Transverse colon (tissue), 4 donors: ENCODE measurements at regions of chr12 and their contacts with region 1.

Region 1: GRCh38 chr12:7108796-7109571 is at the start of gene C1RL:
- DNase-seq: peak; percentile 93
- H3K4me3 ChIP-seq: peak within 1 kb of the TSS; percentile 54 to 69 (median 62)
- H3K27ac ChIP-seq: peak within 1 kb of the TSS; percentile 92 to 95 (median 93)
- H3K4me1 ChIP-seq: peaks cover 12 to 29% (median 17%) of the 10 kb centered on the region in 4 donors
- H3K27me3 ChIP-seq: no peaks in the 10 kb centered on the region
- CTCF ChIP-seq: peak; percentile 98 to 99 (median 99)
- EP300 ChIP-seq: peak; percentile 80
- POLR2A ChIP-seq: peak; percentile 47
- total RNA-seq, gene C1RL: 39.6 to 261 (median 65.0) TPM

Region 2: GRCh38 chr12:6867413-6868210 is 241.4 kb before region 1 on chr12 and contains the start of gene TPI1:
- in situ Hi-C with region 1: no loop called
- intact Hi-C with region 1: loop called (anchors 2 kb)
- DNase-seq: peak; percentile 90
- H3K4me3 ChIP-seq: peak within 1 kb of the TSS; percentile 88 to 99 (median 94)
- H3K27ac ChIP-seq: peak within 1 kb of the TSS; percentile 97 to 99 (median 98)
- H3K4me1 ChIP-seq: peaks cover 24 to 47% (median 42%) of the 10 kb centered on the region in 4 donors
- H3K27me3 ChIP-seq: no peaks in the 10 kb centered on the region
- CTCF ChIP-seq: no peak
- EP300 ChIP-seq: no peak
- POLR2A ChIP-seq: peak; percentile 100
- total RNA-seq, gene TPI1: 360 to 671 (median 400) TPM

Region 3: GRCh38 chr12:6904280-6905278 is 204.4 kb before region 1 on chr12 and contains the start of gene LRRC23:
- in situ Hi-C with region 1: loop called in 1 of 4 experiments (anchors 25 kb)
- intact Hi-C with region 1: no loop called
- DNase-seq: peak; percentile 99
- H3K4me3 ChIP-seq: peak within 1 kb of the TSS; percentile 18 to 74 (median 56)
- H3K27ac ChIP-seq: peak within 1 kb of the TSS; percentile 79 to 87 (median 85)
- H3K4me1 ChIP-seq: peaks cover 4 to 23% (median 20%) of the 10 kb centered on the region in 4 donors
- H3K27me3 ChIP-seq: no peaks in the 10 kb centered on the region
- CTCF ChIP-seq: no peak
- EP300 ChIP-seq: no peak
- POLR2A ChIP-seq: peak; percentile 56
- total RNA-seq, gene LRRC23: 0.60 to 11.3 (median 5.9) TPM in 3 of 4 donors, not detected in the other

Region 4: GRCh38 chr12:6937481-6938297 is 171.3 kb before region 1 on chr12:
- in situ Hi-C with region 1: loop called in 3 of 4 experiments (anchors 10 to 25 kb)
- intact Hi-C with region 1: no loop called
- DNase-seq: peak; percentile 95
- H3K4me3 ChIP-seq: peak overlapping the region; percentile 43 to 59 (median 52)
- H3K27ac ChIP-seq: peak overlapping the region; percentile 90 to 99 (median 96)
- H3K4me1 ChIP-seq: peaks cover 14 to 52% (median 40%) of the 10 kb centered on the region in 4 donors
- H3K27me3 ChIP-seq: no peaks in the 10 kb centered on the region
- CTCF ChIP-seq: peak; percentile 82 to 99 (median 96)
- EP300 ChIP-seq: no peak
- POLR2A ChIP-seq: peak; percentile 90

Region 5: DNA sequence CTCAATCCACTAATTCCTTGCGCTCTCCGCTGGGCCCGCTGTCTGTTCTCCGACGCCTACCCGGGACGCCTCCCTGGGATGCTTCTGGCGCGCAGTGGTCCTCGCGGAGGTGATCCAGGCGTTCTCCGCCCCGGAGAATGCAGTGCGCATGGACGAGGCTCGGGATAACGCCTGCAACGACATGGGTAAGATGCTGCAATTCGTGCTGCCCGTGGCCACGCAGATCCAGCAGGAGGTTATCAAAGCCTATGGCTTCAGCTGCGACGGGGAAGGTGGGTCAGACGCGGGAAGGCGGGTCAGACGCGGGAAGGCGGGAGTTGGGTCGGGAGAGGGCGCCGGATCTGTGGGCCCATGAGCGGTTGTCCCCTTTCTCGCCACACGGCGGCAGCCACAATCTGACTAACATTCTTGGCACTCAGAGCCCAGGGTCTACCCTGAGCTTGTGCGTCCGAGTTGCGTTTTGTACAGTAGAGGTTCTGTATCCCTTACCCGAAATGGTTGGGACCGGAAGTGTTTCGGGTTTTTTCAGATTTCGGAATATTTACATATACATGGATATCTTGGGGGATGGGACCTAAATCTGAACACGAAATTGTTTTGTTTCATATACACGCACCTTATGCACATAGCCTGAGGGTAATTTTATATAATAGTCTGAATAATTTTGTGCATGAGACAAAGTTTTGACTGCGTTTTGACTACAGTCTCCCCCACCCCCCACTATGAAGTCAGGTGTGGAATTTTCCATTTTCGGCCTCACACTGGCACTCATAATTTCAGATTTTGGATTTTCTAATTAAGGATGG is 164.4 kb before region 1 on chr12:
- in situ Hi-C with region 1: loop called in 3 of 4 experiments (anchors 10 to 25 kb)
- intact Hi-C with region 1: no loop called
- DNase-seq: peak; percentile 96
- H3K4me3 ChIP-seq: peak overlapping the region; percentile 41 to 58 (median 48)
- H3K27ac ChIP-seq: peak overlapping the region; percentile 93 to 99 (median 95)
- H3K4me1 ChIP-seq: peaks cover 21 to 44% (median 28%) of the 10 kb centered on the region in 4 donors
- H3K27me3 ChIP-seq: no peaks in the 10 kb centered on the region
- CTCF ChIP-seq: peak; percentile 76 to 99 (median 85)
- EP300 ChIP-seq: no peak
- POLR2A ChIP-seq: no peak

Region 6: DNA sequence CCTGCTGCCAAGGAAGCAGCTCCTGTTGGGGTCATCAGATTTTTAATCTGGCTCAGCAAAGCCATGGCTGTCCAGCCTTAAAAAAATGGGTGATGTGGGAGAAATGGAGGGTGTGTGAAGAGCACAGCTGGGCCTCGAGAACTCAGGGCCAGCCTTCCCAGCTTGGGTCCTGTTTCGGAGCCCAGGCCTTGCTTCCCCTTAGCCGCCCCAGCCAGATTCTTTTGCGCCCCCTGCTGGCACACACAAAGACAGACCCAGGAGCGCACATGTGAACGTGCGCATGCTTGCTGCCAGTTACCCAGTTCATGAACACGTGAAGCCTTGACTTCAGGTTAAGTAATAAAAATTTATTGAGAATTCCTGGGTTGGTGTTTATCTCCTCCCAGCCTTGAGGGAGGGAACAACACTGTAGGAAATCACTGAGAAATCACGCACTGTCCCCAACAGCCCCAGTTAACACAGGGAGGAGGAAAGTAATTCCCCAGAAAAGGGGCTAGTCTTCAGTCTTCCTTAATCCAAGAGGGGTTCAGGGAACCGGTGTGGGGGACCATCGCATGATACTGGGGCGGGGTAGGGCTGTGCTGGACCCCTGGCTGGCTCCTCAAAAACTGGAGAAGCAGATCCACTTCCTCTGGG is 143.8 kb before region 1 on chr12:
- in situ Hi-C with region 1: no loop called
- intact Hi-C with region 1: loop called (anchors 10 kb)
- DNase-seq: peak; percentile 95
- H3K4me3 ChIP-seq: peak overlapping the region in 2 of 4 donors; percentile 54 to 62
- H3K27ac ChIP-seq: peak overlapping the region; percentile 89 to 95 (median 94)
- H3K4me1 ChIP-seq: peaks cover 34 to 71% (median 57%) of the 10 kb centered on the region in 4 donors
- H3K27me3 ChIP-seq: no peaks in the 10 kb centered on the region
- CTCF ChIP-seq: peak; percentile 81 to 98 (median 91)
- EP300 ChIP-seq: no peak
- POLR2A ChIP-seq: peak; percentile 59

Region 7: GRCh38 chr12:7060353-7060954 is 48.5 kb before region 1 on chr12 and contains the start of gene C1S:
- in situ Hi-C with region 1: no loop called
- intact Hi-C with region 1: loop called (anchors 2 kb)
- DNase-seq: peak; percentile 54
- H3K4me3 ChIP-seq: peak within 1 kb of the TSS; percentile 14 to 49 (median 24)
- H3K27ac ChIP-seq: peak within 1 kb of the TSS; percentile 72 to 85 (median 82)
- H3K4me1 ChIP-seq: peaks cover 0 to 20% (median 8%) of the 10 kb centered on the region in 4 donors
- H3K27me3 ChIP-seq: no peaks in the 10 kb centered on the region
- CTCF ChIP-seq: peak; percentile 48 to 73 (median 62)
- EP300 ChIP-seq: peak; percentile 65
- POLR2A ChIP-seq: peak; percentile 69
- total RNA-seq, gene C1S: 103 to 191 (median 117) TPM

Region 8: DNA sequence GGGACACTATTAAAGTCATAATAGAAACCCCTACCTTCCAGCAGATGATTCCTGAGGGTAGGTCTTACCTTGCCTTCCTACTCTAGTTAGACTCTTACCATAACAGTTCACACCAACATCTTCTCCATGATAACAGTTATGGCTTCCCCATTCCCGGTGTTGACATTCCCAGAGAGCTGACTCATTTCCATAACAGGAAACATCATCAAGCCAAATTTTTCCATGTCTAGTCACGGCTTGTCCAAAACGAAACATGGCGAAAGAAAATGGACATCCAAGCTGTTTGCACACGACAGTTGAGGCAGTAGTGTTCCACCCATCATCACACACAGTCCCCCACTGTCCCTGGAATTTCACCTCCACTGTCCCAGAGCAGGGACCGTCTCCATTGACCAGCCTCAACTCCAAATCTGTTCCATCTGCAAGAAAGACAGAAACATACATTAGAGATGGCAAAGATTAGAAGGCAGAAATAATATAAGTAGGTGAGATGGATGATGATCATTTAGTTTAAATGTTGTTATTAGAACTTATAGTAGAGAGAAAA is 324.4 kb after region 1 on chr12:
- in situ Hi-C with region 1: no loop called
- intact Hi-C with region 1: no loop called
- DNase-seq: no peak
- H3K4me3 ChIP-seq: no peak overlapping the region
- H3K27ac ChIP-seq: no peak overlapping the region
- H3K4me1 ChIP-seq: no peaks in the 10 kb centered on the region
- H3K27me3 ChIP-seq: no peaks in the 10 kb centered on the region
- CTCF ChIP-seq: no peak
- EP300 ChIP-seq: no peak
- POLR2A ChIP-seq: no peak